Heart left ventricle (tissue), 16 donors: ENCODE measurements at regions of chr3 and their contacts with region 1.

Region 1: GRCh38 chr3:169662132-169662842 is 1.2 kb downstream of the MECOM start:
- DNase-seq: peak; percentile 71 to 84 (median 72)
- ATAC-seq: peak; percentile 43 to 88 (median 80)
- H3K4me3 ChIP-seq: peak overlapping the region; percentile 68 to 95 (median 77)
- H3K27ac ChIP-seq: peak overlapping the region; percentile 74 to 96 (median 92)
- H3K4me1 ChIP-seq: peaks cover 0 to 69% (median 12%) of the 10 kb centered on the region in 12 donors
- H3K27me3 ChIP-seq: peaks cover 9 to 94% (median 63%) of the 10 kb centered on the region in 9 donors
- CTCF ChIP-seq: peak; percentile 22 to 68 (median 53)
- POLR2A ChIP-seq: no peak

Region 2: DNA sequence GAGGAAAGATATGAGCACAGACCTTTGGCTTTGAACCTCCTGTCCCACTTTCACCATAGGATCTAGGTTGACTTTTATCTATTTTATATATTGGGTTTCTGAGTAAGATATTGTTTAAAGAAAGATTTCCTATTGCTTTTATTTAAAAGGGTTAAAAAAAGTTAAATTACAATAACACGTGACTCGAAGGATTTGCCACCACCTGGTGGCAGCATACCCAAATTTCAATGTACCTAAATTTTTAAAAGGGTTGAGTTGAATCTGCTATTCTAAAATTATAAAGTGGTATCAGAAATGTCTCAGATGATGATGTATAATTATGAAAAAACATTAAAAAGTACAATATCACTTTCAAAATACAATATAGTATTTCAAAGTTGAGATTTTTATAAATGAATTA is 367.2 kb before region 1 on chr3:
- intact Hi-C with region 1: loop called in 7 of 10 experiments (anchors 2 to 10 kb)
- DNase-seq: no peak
- ATAC-seq: no peak
- H3K4me3 ChIP-seq: no peak overlapping the region
- H3K27ac ChIP-seq: no peak overlapping the region
- H3K4me1 ChIP-seq: peaks cover 0 to 17% (median 0%) of the 10 kb centered on the region in 12 donors
- H3K27me3 ChIP-seq: no peaks in the 10 kb centered on the region
- CTCF ChIP-seq: peak; percentile 17 to 50 (median 38)
- POLR2A ChIP-seq: no peak

Region 3: DNA sequence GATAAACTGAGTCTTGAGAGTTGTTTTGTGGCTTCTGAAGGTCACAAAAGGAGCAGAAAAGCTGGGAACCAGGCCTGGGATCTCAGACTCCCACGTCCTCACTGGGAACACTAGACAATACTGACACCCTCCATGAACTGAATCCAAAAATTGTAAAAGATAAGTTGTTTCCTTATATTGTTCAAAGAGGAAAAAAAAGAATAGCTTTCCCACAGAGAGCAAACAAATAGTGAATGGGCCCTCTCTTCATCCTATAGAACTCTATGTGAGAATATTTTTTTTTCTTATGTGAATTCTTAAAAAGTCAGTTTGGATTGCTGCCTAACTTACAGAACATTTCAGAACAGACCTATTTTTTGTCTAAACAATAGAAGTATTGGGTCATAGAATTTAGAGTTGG is 202.3 kb before region 1 on chr3:
- intact Hi-C with region 1: loop called in 1 of 10 experiments (anchors 5 kb)
- DNase-seq: peak in 2 of 5 donors; percentile 25 to 29
- ATAC-seq: peak in 2 of 4 donors; percentile 43 to 76
- H3K4me3 ChIP-seq: no peak overlapping the region
- H3K27ac ChIP-seq: peak overlapping the region in 6 of 12 donors; percentile 16 to 69 (median 52)
- H3K4me1 ChIP-seq: peaks cover 0 to 38% (median 7%) of the 10 kb centered on the region in 12 donors
- H3K27me3 ChIP-seq: no peaks in the 10 kb centered on the region
- CTCF ChIP-seq: no peak
- POLR2A ChIP-seq: no peak

Region 4: GRCh38 chr3:169573129-169573528 is 89.2 kb before region 1 on chr3:
- intact Hi-C with region 1: loop called in 2 of 10 experiments (anchors 5 to 10 kb)
- DNase-seq: no peak
- ATAC-seq: no peak
- H3K4me3 ChIP-seq: no peak overlapping the region
- H3K27ac ChIP-seq: no peak overlapping the region
- H3K4me1 ChIP-seq: peaks cover 0 to 16% (median 8%) of the 10 kb centered on the region in 12 donors
- H3K27me3 ChIP-seq: no peaks in the 10 kb centered on the region
- CTCF ChIP-seq: peak in 4 of 12 donors; percentile 10 to 21 (median 18)
- POLR2A ChIP-seq: no peak